ENCODE measurements at regions of chr6 and their contacts with region 1.

Region 1: DNA sequence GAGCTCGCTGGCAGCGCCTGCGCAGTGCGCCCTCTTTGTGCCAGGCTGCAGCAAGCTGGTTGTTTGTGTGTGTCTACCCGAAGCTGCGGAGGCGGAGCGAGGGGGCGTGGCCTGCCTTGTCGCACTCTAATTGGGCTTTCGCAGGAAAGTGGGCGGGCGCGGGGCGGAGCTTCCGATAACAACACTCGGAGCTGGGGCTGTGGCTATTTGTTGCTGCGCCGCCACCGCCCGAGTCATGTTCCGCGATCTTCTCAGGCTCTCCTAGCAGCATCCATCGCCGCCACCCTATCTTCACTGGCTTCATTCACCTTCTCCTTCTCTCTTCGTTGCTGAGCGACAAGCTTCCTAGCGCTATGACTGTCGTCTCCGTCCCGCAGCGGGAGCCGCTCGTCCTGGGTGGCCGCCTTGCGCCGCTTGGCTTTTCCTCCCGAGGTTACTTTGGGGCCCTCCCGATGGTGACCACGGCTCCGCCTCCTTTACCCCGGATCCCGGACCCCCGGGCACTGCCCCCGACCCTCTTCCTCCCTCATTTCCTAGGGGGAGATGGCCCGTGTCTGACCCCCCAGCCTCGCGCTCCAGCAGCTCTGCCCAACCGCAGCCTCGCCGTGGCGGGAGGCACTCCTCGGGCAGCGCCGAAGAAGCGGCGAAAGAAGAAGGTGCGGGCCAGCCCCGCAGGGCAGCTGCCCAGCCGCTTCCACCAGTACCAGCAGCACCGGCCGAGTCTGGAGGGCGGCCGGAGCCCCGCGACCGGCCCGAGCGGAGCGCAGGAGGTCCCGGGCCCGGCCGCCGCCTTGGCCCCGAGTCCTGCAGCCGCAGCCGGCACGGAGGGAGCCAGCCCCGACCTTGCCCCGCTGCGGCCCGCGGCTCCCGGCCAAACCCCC is at the start of gene PNRC1:
- DNase-seq: peak; percentile 100
- ATAC-seq: peak; percentile 70 to 75
- H3K4me3 ChIP-seq: peak within 1 kb of the TSS; percentile 94 to 99 (median 95)
- H3K27ac ChIP-seq: peak within 1 kb of the TSS; percentile 98 to 100 (median 99)
- H3K4me1 ChIP-seq: peaks cover 20 to 30% of the 10 kb centered on the region in 2 donors
- H3K27me3 ChIP-seq: no peaks in the 10 kb centered on the region
- CTCF ChIP-seq: peak in 2 of 5 experiments; percentile 5 to 13
- POLR2A ChIP-seq: peak; percentile 100
- total RNA-seq, gene PNRC1: 229 to 458 (median 311) TPM

Region 2: DNA sequence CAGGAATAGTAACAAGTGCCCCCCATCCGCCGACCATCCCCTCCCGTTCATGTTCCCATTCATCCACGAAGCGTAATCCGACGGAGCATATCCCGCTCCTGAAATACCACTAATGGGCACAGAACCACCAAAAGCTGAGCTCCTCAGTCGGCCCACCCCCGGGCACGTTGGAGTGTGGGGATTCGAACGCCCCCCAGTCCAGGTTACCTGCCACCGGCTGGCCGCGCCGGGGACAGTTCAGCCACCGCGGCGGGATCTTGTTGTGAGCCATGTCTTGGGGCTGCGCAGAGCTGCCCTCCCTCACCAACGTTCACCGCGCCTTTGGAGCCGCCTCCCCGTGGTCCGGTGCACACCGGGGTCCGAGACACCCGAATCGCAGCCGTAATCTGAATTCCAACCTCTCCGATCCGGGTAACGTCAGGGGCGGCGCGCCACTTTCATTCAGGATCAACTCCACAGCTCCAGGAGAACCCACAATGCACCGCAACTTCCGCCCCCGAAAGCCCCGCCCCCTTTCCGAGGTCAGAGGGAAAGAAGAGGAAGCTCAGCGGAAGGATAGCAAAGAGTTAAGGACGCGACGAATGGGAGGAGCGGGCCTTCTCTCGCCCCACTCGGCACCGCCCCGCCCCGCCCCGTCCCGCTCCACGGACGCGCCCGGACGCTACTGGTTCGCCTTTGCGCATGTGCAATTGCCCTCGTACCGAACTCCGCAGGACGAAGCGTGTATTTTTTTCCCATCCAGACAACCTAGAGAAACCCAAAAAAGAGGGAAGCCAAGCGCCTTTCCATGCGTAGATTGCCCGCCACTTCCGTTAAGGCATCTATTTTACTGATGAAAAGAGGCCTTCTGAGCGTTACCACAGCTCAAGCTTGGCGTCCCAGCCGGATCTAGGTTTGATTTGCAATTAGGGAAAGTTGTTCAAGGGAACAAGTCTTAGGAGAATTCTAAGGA is 117.4 kb before region 1 on chr6 and contains the start of gene RNGTT:
- in situ Hi-C with region 1: no loop called
- intact Hi-C with region 1: loop called (anchors 5 kb)
- DNase-seq: peak; percentile 97 to 98
- ATAC-seq: peak; percentile 99 to 100
- H3K4me3 ChIP-seq: peak within 1 kb of the TSS; percentile 86 to 97 (median 92)
- H3K27ac ChIP-seq: peak within 1 kb of the TSS; percentile 86 to 90 (median 90)
- H3K4me1 ChIP-seq: peaks cover 15 to 17% of the 10 kb centered on the region in 2 donors
- H3K27me3 ChIP-seq: no peaks in the 10 kb centered on the region
- CTCF ChIP-seq: no peak
- POLR2A ChIP-seq: peak; percentile 23 to 46
- total RNA-seq, gene RNGTT: 4.9 to 11.3 (median 8.2) TPM

Region 3: GRCh38 chr6:89058627-89059026 is 22.2 kb before region 1 on chr6:
- in situ Hi-C with region 1: no loop called
- intact Hi-C with region 1: no loop called
- DNase-seq: no peak
- ATAC-seq: no peak
- H3K4me3 ChIP-seq: no peak overlapping the region
- H3K27ac ChIP-seq: no peak overlapping the region
- H3K4me1 ChIP-seq: no peaks in the 10 kb centered on the region
- H3K27me3 ChIP-seq: no peaks in the 10 kb centered on the region
- CTCF ChIP-seq: no peak
- POLR2A ChIP-seq: no peak

Region 4: DNA sequence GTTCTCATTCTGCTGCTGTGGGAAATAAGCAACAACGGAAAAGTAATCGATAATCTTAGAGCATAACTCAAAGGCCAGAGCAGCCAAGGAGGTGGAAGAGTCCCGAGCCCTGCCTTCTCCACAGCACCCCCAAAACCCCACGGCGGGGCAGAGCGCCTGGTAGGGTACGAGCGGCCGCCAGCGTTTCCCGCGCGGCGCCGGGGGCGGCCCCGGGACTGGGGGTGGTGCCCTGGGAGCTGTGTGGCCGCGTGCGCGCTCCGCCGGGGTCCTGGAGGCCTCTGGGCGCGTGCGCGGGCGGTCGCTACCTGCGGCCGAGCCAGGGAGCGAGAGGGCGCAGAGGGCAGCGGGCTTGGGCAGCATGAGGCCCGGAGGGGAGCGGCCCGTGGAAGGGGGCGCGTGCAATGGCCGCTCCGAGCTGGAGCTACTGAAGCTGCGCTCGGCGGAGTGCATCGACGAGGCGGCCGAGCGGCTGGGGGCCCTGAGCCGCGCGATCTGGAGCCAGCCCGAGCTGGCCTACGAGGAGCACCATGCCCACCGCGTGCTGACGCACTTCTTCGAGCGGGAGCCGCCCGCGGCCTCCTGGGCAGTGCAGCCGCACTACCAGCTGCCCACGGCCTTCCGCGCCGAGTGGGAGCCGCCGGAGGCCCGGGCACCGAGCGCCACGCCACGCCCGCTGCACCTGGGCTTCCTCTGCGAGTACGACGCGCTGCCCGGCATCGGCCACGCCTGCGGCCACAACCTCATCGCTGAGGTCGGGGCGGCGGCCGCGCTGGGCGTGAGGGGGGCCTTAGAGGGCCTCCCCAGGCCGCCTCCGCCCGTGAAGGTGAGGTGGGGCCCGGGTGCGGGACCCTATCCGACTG is 65.2 kb after region 1 on chr6 and contains the start of gene PM20D2:
- in situ Hi-C with region 1: no loop called
- intact Hi-C with region 1: loop called (anchors 1 kb)
- DNase-seq: peak; percentile 54 to 75
- ATAC-seq: peak; percentile 67 to 71
- H3K4me3 ChIP-seq: peak within 1 kb of the TSS; percentile 74 to 90 (median 82)
- H3K27ac ChIP-seq: peak within 1 kb of the TSS; percentile 94 to 99 (median 98)
- H3K4me1 ChIP-seq: peaks cover 23 to 25% of the 10 kb centered on the region in 2 donors
- H3K27me3 ChIP-seq: no peaks in the 10 kb centered on the region
- CTCF ChIP-seq: no peak
- POLR2A ChIP-seq: peak; percentile 85 to 88
- total RNA-seq, gene PM20D2: 18.1 to 54.6 (median 26.3) TPM

Region 5: DNA sequence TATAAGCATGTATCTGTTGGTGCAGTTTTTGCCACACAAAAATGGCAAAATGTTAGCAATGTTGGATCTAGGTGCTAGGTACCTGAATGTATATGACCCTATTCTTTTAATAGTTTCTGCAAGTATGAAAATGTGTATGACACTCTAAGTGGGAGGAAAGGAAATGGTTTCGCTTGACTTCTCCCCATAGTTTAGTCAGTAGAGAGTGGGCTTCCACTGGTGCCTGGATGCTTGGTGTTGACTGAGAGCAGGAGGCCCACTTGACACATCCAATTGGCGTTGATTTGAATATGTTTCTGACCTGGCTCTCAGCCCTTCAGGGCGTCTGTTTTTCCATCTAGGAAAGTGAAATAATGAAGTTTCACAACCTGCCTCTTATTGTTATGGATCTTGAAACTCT is 178.1 kb after region 1 on chr6:
- in situ Hi-C with region 1: no loop called
- intact Hi-C with region 1: no loop called
- DNase-seq: no peak
- ATAC-seq: no peak
- H3K4me3 ChIP-seq: no peak overlapping the region
- H3K27ac ChIP-seq: no peak overlapping the region
- H3K4me1 ChIP-seq: no peaks in the 10 kb centered on the region
- H3K27me3 ChIP-seq: no peaks in the 10 kb centered on the region
- CTCF ChIP-seq: no peak
- POLR2A ChIP-seq: no peak

Region 6: GRCh38 chr6:89371849-89372505 is 291.2 kb after region 1 on chr6:
- in situ Hi-C with region 1: loop called in 1 of 4 experiments (anchors 25 kb)
- intact Hi-C with region 1: no loop called
- DNase-seq: peak; percentile 46 to 78
- ATAC-seq: peak; percentile 67 to 75
- H3K4me3 ChIP-seq: no peak overlapping the region
- H3K27ac ChIP-seq: peak overlapping the region; percentile 60 to 79 (median 72)
- H3K4me1 ChIP-seq: peaks cover 30 to 37% of the 10 kb centered on the region in 2 donors
- H3K27me3 ChIP-seq: no peaks in the 10 kb centered on the region
- CTCF ChIP-seq: peak; percentile 77 to 98 (median 92)
- POLR2A ChIP-seq: no peak

Measured in gastrocnemius medialis (tissue), 4 donors.